HEK293T (cell line): ENCODE measurements at regions of chr11 and their contacts with region 1.

Region 1: DNA sequence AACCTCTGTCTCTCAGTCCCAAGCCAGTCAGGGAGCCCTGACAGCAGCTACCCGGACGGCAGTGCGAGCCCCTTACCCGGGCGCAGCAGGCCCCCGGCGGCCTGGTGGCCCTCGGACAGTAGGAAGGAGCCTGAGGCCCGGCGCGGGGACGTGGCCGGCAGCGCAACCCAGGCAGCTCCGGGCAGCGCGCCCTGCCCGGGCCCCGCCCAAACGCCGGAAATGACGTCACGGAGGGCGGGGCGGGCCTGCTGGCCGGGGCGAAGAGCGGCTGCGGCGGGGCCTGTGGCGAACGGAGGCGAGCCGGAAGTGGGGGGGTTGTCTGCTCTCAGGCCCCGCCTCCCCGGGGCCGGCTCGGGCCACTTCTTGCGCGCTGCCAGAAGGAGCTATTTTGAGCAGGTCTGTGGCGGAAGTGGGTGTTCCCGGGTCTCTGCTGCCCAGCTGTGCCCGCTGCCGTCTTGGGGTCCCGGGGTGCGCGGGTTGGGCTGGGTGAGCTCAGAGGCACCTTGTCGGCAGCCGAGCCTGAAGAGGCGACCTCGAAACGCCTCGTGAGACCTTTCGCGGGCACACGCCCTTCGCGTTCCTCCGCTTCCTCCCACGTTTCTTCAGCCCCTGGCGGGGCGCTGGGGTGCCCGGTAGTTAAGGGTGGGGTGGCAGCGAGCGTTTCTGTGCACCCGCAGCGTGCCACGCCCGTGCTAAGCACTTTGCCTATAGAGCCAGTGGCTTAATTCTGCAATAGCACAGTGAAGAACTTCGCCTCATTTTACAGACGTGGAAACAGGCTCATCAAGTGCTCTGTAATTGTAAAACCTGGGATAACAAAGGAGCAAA is at the start of gene C11orf24:
- DNase-seq: peak; percentile 100

Region 2: GRCh38 chr11:68257475-68258362 is 14.3 kb before region 1 on chr11:
- CTCF ChIA-PET with region 1: interaction called, 7 read pairs
- POLR2A ChIA-PET with region 1: interaction called, 12 read pairs
- DNase-seq: peak; percentile 87

Region 3: GRCh38 chr11:68297812-68298658 is 26.0 kb after region 1 on chr11:
- CTCF ChIA-PET with region 1: interaction called, 8 read pairs
- POLR2A ChIA-PET with region 1: interaction called, 17 read pairs
- DNase-seq: peak; percentile 91

Region 4: DNA sequence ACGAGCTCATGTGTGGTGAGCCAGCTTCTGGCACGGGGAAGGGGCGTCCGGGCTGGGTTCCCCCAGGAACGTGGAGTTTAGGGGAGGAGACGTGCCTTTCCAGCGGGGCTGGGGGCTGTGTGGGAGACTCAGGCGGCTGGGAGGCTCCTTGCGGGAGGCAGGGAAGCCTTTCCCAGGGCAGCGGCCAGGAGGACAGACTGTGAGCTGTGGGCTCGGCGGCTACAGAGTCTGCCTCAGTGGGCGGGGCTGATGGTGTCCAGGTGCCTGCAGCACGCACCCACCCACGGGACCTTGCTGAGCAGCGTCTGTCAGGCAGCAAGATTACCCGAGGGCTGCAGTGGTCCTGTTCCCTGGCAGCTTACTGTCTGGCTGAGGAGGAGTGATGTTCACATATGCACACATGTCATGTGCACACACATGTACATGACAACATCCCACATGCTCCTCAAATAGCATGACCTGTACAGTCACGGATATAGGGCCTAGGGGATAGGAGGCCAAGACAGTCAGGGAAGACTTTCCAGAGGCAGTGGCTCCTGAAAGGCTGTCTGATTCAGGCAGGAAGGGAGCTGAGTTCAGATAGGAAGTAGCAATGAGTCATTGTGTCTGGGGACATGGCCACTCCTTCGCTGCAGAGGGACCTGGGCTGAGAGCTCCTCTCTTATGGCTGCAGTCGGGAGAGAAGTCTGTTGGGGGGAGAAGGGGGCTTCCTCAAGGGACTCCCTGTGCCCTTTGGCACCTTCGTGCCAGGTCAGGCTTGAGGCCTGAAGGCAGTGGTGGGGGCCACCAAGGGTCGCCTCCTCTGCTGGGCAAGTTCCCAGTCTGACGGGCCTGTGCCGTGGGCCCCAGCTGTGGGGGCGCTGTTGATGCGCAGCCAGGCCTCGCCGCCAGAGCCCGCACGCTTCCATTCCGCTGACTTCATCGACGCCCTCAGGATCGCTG is 165.3 kb after region 1 on chr11:
- CTCF ChIA-PET with region 1: no interaction called
- POLR2A ChIA-PET with region 1: no interaction called
- DNase-seq: no peak

Region 5: DNA sequence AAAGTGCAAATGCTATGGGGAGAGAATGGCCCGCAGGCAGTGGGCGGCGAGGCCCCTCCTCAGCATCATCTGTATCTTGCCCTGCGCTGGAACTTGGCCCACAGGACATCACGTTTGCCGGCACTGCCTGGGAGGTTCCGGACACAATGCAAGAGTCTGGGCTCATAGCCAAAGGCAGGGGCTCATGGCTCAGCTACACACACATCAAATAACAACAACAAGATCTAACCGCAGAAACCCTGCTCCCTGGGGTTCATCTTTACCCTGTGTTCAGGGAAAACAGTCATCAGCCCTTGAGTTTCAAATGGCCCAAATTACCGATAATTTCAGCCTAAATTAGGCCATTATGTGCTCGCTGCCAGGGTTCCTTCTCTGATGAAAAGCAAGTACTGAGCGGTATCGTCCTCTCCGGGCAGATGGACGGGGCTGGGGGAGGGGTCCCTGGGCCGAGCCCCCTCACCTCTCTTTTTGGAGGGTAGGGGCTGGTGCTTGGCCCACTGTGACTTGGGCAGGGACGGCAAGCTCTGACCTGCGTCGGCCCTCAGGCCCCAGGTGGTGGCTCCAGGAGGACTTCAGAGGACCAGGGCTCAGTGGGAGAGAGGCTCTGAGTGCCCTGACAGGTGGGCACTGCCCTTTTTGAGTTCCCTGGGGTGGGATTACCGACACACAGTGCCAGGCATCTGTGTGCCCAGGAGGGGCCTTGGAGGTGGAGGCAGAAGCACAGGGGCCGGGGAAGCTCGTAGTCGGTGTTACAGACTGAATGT is 387.3 kb after region 1 on chr11:
- CTCF ChIA-PET with region 1: no interaction called
- POLR2A ChIA-PET with region 1: no interaction called
- DNase-seq: peak; percentile 30